H1 (cell line): ENCODE measurements at regions of chr17 and their contacts with region 1.

Region 1: GRCh38 chr17:44919885-44920564 is 4.7 kb upstream of the GFAP start:
- DNase-seq: peak; percentile 56 to 80
- H3K4me3 ChIP-seq: 0 out of 8 replicates have a peak overlapping the region, but pooled peaks of 1 of the 4 experiments have one; percentile 10
- H3K27ac ChIP-seq: no peak overlapping the region
- H3K4me1 ChIP-seq: peaks cover 6 to 15% (median 9%) of the 10 kb centered on the region in 4 experiments
- H3K27me3 ChIP-seq: no peaks in the 10 kb centered on the region
- CTCF ChIP-seq: peak; percentile 93 to 96 (median 96)
- EP300 ChIP-seq: no peak
- POLR2A ChIP-seq: no peak
- RAD21 ChIP-seq: peak; percentile 93

Region 2: GRCh38 chr17:44850612-44851011 is 69.4 kb before region 1 on chr17:
- CTCF ChIA-PET with region 1: no interaction called
- POLR2A ChIA-PET with region 1: no interaction called
- DNase-seq: no peak
- H3K4me3 ChIP-seq: no peak overlapping the region
- H3K27ac ChIP-seq: no peak overlapping the region
- H3K4me1 ChIP-seq: peaks cover 0 to 6% (median 3%) of the 10 kb centered on the region in 4 experiments; a peak in 4 of 7 replicates
- H3K27me3 ChIP-seq: no peaks in the 10 kb centered on the region
- CTCF ChIP-seq: no peak
- EP300 ChIP-seq: no peak
- POLR2A ChIP-seq: no peak
- RAD21 ChIP-seq: no peak

Region 3: DNA sequence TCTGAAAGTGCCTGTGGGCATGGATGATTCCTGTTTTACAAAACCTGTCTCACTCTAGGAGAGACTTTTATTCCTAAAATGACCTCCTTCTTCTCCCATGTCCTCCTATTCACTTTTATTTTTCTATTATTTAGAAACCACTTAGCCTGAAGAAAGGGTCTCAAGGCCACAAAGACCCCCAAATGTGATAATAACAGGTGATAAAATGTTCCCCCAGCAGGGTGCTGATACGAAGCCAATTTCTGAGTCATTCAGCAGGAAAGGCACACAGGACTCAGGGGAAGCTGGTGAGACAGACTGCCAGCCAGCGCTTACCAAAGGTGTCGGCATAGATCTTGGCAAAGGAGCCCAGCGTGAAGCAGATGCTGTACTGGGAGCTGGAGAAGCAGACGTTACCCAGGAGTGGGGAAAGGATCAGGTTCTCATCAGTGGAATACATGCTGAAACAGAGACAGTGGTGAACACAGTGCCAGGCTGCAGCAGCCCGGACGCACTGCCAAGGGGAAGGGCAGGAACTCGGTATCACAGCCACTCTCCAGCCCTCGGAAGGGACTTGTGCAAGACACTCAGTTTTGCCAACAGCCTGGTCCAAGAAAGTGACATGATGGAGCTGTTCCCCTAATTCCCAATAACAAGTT is 47.8 kb before region 1 on chr17:
- CTCF ChIA-PET with region 1: no interaction called
- POLR2A ChIA-PET with region 1: no interaction called
- DNase-seq: no peak
- H3K4me3 ChIP-seq: no peak overlapping the region
- H3K27ac ChIP-seq: no peak overlapping the region
- H3K4me1 ChIP-seq: no peaks in the 10 kb centered on the region
- H3K27me3 ChIP-seq: no peaks in the 10 kb centered on the region
- CTCF ChIP-seq: no peak
- EP300 ChIP-seq: no peak
- POLR2A ChIP-seq: no peak
- RAD21 ChIP-seq: no peak

Region 4: GRCh38 chr17:44932496-44933097 is 12.6 kb after region 1 on chr17:
- CTCF ChIA-PET with region 1: interaction called, 19 read pairs
- POLR2A ChIA-PET with region 1: interaction called, 6 read pairs
- DNase-seq: no peak
- H3K4me3 ChIP-seq: no peak overlapping the region
- H3K27ac ChIP-seq: no peak overlapping the region
- H3K4me1 ChIP-seq: no peaks in the 10 kb centered on the region
- H3K27me3 ChIP-seq: no peaks in the 10 kb centered on the region
- CTCF ChIP-seq: no peak
- EP300 ChIP-seq: no peak
- POLR2A ChIP-seq: no peak
- RAD21 ChIP-seq: no peak

Region 5: GRCh38 chr17:44961921-44962350 is 41.9 kb after region 1 on chr17:
- CTCF ChIA-PET with region 1: interaction called, 182 read pairs
- POLR2A ChIA-PET with region 1: interaction called, 4 read pairs
- DNase-seq: no peak
- H3K4me3 ChIP-seq: no peak overlapping the region
- H3K27ac ChIP-seq: no peak overlapping the region
- H3K4me1 ChIP-seq: peaks cover 0 to 14% (median 7%) of the 10 kb centered on the region in 4 experiments; a peak in 5 of 7 replicates
- H3K27me3 ChIP-seq: peaks cover 14 to 51% (median 41%) of the 10 kb centered on the region in 4 experiments; a peak in 6 of 7 replicates
- CTCF ChIP-seq: peak; percentile 47 to 57 (median 52)
- EP300 ChIP-seq: no peak
- POLR2A ChIP-seq: no peak
- RAD21 ChIP-seq: peak; percentile 44 to 58; a peak in 3 of 4 replicates

Region 6: DNA sequence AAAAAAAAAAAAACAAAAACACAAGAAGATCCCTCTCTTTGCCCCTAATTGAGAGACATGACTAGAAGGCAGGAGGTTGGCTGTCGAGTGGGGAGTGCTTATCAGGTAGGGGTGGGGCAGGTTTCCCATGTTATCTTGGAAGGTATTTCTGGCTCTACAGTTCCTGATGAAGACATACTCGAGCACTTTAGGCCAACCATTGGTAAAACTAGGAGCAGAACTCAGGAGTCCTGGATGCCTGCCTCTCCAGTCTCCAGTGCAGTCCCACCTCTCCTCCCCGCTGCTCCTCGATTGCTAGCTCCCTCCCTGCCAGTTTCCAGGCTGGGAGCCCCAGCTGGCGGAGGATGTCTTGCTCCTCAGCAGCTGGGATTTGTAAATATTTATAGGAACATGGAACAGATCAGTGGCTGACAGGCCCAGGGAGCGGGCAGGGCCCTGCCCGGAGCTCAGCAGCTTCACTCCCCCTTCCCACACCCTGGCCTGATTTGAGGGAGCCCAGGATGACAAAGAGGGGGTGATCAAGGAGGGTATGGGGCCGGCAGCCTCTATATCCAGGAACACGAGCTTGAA is 59.5 kb after region 1 on chr17:
- CTCF ChIA-PET with region 1: interaction called, 22 read pairs
- POLR2A ChIA-PET with region 1: no interaction called
- DNase-seq: no peak
- H3K4me3 ChIP-seq: no peak overlapping the region
- H3K27ac ChIP-seq: no peak overlapping the region
- H3K4me1 ChIP-seq: peaks cover 0 to 11% (median 6%) of the 10 kb centered on the region in 4 experiments; a peak in 5 of 7 replicates
- H3K27me3 ChIP-seq: no peaks in the 10 kb centered on the region; a peak in 1 of 7 replicates
- CTCF ChIP-seq: no peak
- EP300 ChIP-seq: no peak
- POLR2A ChIP-seq: no peak
- RAD21 ChIP-seq: no peak

Region 7: DNA sequence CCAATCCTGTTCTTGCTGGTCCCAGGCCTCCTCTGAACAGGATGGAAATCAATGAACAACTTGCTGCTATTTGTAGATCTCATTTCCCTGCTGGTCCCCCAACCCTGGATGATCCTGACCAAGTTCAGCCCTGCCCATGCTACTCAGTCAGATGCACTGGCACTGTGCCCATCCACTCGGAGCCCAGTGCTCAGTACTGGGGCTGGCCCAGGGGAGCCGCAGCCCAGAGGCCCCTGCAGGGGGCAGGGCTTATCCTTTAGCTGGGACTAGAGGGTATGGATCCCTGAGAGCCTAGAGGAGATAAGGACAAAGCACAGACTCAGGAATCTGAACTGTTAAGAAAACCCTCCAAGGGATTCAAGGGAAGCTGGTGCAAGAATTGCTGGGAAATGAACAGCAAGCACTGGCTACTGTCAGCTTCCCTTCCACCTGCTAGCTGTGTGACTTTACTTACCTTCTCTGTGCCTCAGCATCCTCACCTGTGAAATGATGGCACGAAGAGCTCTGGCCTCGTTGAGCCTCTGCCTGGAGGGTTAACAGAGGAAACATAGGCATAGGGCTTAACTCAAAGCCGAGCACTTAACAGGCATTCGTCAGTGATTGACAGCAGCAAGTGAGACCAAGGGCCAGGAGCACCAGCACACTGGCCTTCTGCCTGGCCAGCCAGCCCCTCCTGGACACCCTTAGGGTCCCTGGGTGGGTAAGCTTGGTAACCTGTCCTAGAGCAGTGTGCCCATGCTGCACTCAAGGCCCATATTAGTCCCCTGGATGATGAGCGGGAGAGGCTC is 77.9 kb after region 1 on chr17:
- CTCF ChIA-PET with region 1: interaction called, 29 read pairs
- POLR2A ChIA-PET with region 1: interaction called, 6 read pairs
- DNase-seq: no peak
- H3K4me3 ChIP-seq: no peak overlapping the region
- H3K27ac ChIP-seq: no peak overlapping the region
- H3K4me1 ChIP-seq: peaks cover 0 to 3% (median 0%) of the 10 kb centered on the region in 4 experiments; a peak in 1 of 7 replicates
- H3K27me3 ChIP-seq: peaks cover 0 to 4% (median under 1%) of the 10 kb centered on the region in 4 experiments; a peak in 2 of 7 replicates
- CTCF ChIP-seq: no peak
- EP300 ChIP-seq: no peak
- POLR2A ChIP-seq: no peak
- RAD21 ChIP-seq: no peak

Region 8: GRCh38 chr17:45021607-45022287 is 101.7 kb after region 1 on chr17:
- CTCF ChIA-PET with region 1: interaction called, 243 read pairs
- POLR2A ChIA-PET with region 1: interaction called, 12 read pairs
- DNase-seq: peak in 1 of 2 experiments; percentile 85
- H3K4me3 ChIP-seq: peak overlapping the region; percentile 9 to 58 (median 40); a peak in 7 of 8 replicates
- H3K27ac ChIP-seq: no peak overlapping the region
- H3K4me1 ChIP-seq: peaks cover 9 to 23% (median 14%) of the 10 kb centered on the region in 4 experiments
- H3K27me3 ChIP-seq: peaks cover 20 to 43% (median 40%) of the 10 kb centered on the region in 4 experiments
- CTCF ChIP-seq: peak; percentile 82 to 94 (median 87)
- EP300 ChIP-seq: no peak; a peak in 1 of 3 replicates
- POLR2A ChIP-seq: peak in 1 of 2 experiments; percentile 26; a peak in 1 of 3 replicates
- RAD21 ChIP-seq: peak; percentile 74 to 92